PC-9 (cell line): ENCODE measurements at regions of chr5 and their contacts with region 1.

Region 1: GRCh38 chr5:149731639-149732323 is 1.7 kb downstream of the PPARGC1B start:
- DNase-seq: peak; percentile 59 to 68
- H3K4me3 ChIP-seq: peak overlapping the region; percentile 94
- H3K27ac ChIP-seq: no peak overlapping the region
- H3K4me1 ChIP-seq: peaks cover 15% of the 10 kb centered on the region
- H3K27me3 ChIP-seq: no peaks in the 10 kb centered on the region
- CTCF ChIP-seq: no peak

Region 2: GRCh38 chr5:149310947-149311658 is 420.7 kb before region 1 on chr5:
- CTCF ChIA-PET with region 1: no interaction called
- POLR2A ChIA-PET with region 1: no interaction called
- intact Hi-C with region 1: no loop called
- DNase-seq: no peak
- H3K4me3 ChIP-seq: no peak overlapping the region
- H3K27ac ChIP-seq: no peak overlapping the region
- H3K4me1 ChIP-seq: no peaks in the 10 kb centered on the region
- H3K27me3 ChIP-seq: no peaks in the 10 kb centered on the region
- CTCF ChIP-seq: no peak

Region 3: DNA sequence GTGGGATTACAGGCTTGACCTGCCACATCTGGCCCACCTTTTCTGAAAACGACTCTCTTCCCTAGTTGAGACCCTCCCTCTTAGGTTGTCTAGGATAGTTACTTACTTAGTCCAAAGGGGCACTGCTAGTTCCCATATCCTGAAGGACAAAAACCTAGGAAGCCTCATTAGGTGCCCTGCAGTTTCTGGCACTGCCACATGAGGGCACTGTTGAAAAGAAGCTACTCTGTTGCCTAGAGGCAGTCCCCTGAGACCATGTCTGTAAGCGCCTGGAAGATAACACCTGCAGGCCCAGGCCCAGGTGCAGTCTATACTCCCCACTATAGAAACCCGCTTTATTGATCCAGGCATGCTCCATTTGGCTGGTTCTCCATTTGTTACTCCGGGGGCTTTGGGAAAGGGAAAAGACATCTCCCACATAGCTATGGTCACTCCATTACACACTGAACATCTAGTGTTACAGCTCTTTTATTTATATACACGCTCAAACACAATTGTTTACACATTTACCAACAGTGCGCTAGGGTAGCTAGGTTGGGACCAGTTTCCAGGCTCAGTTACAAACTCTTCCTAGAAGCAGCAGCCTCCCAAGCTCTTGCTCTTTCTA is 75.1 kb before region 1 on chr5:
- CTCF ChIA-PET with region 1: no interaction called
- POLR2A ChIA-PET with region 1: no interaction called
- intact Hi-C with region 1: loop called (anchors 5 kb)
- DNase-seq: peak in 1 of 2 experiments; percentile 48
- H3K4me3 ChIP-seq: no peak overlapping the region
- H3K27ac ChIP-seq: no peak overlapping the region
- H3K4me1 ChIP-seq: no peaks in the 10 kb centered on the region
- H3K27me3 ChIP-seq: no peaks in the 10 kb centered on the region
- CTCF ChIP-seq: peak; percentile 88

Region 4: DNA sequence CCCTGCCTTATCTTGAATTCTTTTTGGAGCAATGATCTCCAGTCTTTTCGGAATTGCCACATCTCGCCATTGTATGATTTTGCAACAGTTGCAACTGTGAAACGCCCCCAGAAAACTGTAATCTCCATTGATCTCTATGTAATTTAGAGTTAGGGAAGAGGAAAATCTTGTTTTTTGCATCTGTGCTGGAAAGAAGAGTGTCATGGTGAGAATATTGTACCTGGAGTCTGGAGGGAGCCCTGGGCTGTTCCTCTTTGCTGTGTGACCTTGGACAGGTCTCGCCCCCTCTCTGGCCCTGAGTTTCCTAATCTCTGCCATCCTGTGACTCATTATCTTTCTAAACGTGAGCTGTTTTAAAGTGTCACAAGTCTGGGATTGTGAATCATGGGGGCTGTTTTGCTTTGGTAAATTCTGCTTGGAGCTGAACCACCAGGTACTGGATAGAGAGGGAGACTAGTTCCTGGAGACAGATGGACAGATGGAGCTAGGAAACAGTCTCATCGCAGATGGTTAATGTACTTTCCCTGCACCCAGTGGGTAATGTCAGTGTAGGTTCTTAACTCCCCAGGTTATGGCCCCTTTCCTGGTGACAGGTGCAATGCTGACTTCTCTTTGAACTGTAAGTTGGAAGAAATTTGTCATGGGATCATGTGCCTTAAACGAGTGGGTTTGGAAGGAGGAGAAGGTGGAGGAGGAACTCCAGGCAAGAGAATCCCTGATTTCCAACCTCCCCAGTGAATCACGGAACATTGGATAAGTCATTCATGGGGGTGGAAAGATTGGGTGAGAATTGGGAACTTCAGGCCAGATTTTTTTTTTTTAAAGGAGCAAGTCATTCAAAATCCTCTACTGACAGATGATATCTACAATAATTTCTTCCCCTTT is 17.9 kb after region 1 on chr5:
- CTCF ChIA-PET with region 1: interaction called, 4 read pairs
- POLR2A ChIA-PET with region 1: interaction called, 21 read pairs
- intact Hi-C with region 1: loop called (anchors 1 kb)
- DNase-seq: peak in 1 of 2 experiments; percentile 48
- H3K4me3 ChIP-seq: no peak overlapping the region
- H3K27ac ChIP-seq: peak overlapping the region; percentile 24
- H3K4me1 ChIP-seq: peaks cover 59% of the 10 kb centered on the region
- H3K27me3 ChIP-seq: no peaks in the 10 kb centered on the region
- CTCF ChIP-seq: no peak

Region 5: DNA sequence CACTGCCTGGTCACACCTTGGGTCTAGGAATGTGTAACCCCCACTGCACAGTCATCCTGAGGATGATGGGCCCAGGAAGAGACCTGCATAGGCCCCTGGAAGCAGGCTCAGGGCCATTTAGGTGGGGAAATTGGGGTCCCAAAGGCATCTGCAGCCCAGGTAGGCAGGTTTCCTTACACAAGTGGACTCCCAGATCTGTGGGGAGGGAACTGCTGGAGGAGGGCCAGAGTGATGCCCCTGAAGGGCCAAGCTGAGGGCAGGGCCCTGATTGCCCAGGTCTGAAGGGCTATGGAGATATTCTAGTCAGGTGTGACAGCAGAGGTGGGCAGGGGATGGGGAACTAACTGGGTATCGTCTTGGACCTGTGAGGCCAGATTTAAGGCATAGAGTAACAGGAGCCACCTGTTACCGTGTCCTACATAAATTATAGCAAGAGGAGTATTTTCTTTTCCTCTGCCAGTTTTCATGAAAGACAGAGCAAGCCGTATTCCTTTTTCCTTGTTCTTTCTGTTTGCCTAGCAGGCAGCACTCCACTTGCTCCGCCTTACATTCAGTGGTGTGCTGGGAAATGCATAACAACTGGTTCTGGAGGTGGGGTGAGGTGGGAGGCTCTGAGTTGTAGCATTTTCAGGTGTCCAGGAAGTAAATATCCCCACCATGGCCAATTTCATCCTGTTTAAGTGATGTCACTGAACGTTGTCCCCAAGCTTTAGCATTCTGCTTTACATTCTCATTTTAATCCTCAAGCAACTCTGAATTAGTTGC is 39.6 kb after region 1 on chr5:
- CTCF ChIA-PET with region 1: no interaction called
- POLR2A ChIA-PET with region 1: no interaction called
- intact Hi-C with region 1: loop called (anchors 5 kb)
- DNase-seq: peak in 1 of 2 experiments; percentile 27
- H3K4me3 ChIP-seq: no peak overlapping the region
- H3K27ac ChIP-seq: no peak overlapping the region
- H3K4me1 ChIP-seq: 0 out of 2 replicates have a peak, but pooled peaks cover 8% of the 10 kb centered on the region
- H3K27me3 ChIP-seq: no peaks in the 10 kb centered on the region
- CTCF ChIP-seq: no peak